CD8-positive, alpha-beta memory T cell (primary cell): ENCODE measurements at regions of chr5 and their contacts with region 1.

Region 1: GRCh38 chr5:96934708-96935558 is 947 bp upstream of the LNPEP start:
- DNase-seq: peak; percentile 87 to 99 (median 96)
- H3K4me3 ChIP-seq: peak overlapping the region; percentile 89
- H3K4me3 Mint-ChIP-seq: peak overlapping the region; percentile 82 to 94 (median 91)
- H3K27ac ChIP-seq: peak overlapping the region; percentile 81
- H3K27ac Mint-ChIP-seq: peak overlapping the region; percentile 85 to 100 (median 96)
- H3K4me1 ChIP-seq: peaks cover 67% of the 10 kb centered on the region
- H3K4me1 Mint-ChIP-seq: peaks cover 66 to 75% (median 75%) of the 10 kb centered on the region in 3 donors
- H3K27me3 ChIP-seq: no peaks in the 10 kb centered on the region
- H3K27me3 Mint-ChIP-seq: peaks cover 0 to 3% of the 10 kb centered on the region in 2 donors

Region 2: DNA sequence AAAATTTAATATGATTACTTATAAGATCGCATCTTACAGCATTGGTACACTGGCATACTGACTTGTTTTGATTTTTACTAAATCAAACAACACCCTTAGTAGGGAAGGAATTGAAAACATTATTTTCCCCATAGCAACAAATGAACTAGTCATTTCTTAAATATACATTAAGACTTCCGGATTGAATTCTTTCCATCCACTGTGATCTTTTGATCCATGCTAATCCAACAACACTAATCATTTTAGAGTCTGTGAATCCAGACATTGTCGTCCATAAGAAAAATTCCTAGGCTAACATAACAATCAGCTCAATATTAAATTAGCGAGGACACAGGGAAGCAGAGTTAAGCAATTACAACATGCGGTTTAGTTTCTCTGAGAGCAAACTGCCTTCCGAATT is 105.6 kb before region 1 on chr5:
- CTCF ChIA-PET with region 1: no interaction called
- POLR2A ChIA-PET with region 1: no interaction called
- DNase-seq: no peak
- H3K4me3 ChIP-seq: no peak overlapping the region
- H3K4me3 Mint-ChIP-seq: no peak overlapping the region
- H3K27ac ChIP-seq: no peak overlapping the region
- H3K27ac Mint-ChIP-seq: no peak overlapping the region
- H3K4me1 ChIP-seq: no peaks in the 10 kb centered on the region
- H3K4me1 Mint-ChIP-seq: peaks cover 0 to 2% (median 0%) of the 10 kb centered on the region in 3 donors
- H3K27me3 ChIP-seq: no peaks in the 10 kb centered on the region
- H3K27me3 Mint-ChIP-seq: peaks cover 0 to 2% of the 10 kb centered on the region in 2 donors

Region 3: GRCh38 chr5:96876292-96876850 is 58.6 kb before region 1 on chr5 and contains the start of gene ERAP2:
- CTCF ChIA-PET with region 1: interaction called, 3 read pairs
- POLR2A ChIA-PET with region 1: interaction called, 22 read pairs
- DNase-seq: peak in 2 of 5 donors; percentile 60 to 67
- H3K4me3 ChIP-seq: peak within 1 kb of the TSS; percentile 74
- H3K4me3 Mint-ChIP-seq: peak within 1 kb of the TSS; percentile 87 to 97 (median 94)
- H3K27ac ChIP-seq: peak within 1 kb of the TSS; percentile 72
- H3K27ac Mint-ChIP-seq: peak within 1 kb of the TSS; percentile 89 to 99 (median 97)
- H3K4me1 ChIP-seq: peaks cover 57% of the 10 kb centered on the region
- H3K4me1 Mint-ChIP-seq: peaks cover 47 to 75% (median 62%) of the 10 kb centered on the region in 3 donors
- H3K27me3 ChIP-seq: no peaks in the 10 kb centered on the region
- H3K27me3 Mint-ChIP-seq: no peaks in the 10 kb centered on the region
- total RNA-seq, gene ERAP2: 37.0 to 41.4 TPM

Region 4: GRCh38 chr5:96963267-96963666 is 28.3 kb after region 1 on chr5:
- CTCF ChIA-PET with region 1: interaction called, 8 read pairs
- POLR2A ChIA-PET with region 1: interaction called, 14 read pairs
- DNase-seq: no peak
- H3K4me3 ChIP-seq: peak overlapping the region; percentile 3
- H3K4me3 Mint-ChIP-seq: peak overlapping the region; percentile 29 to 79 (median 70)
- H3K27ac ChIP-seq: no peak overlapping the region
- H3K27ac Mint-ChIP-seq: peak overlapping the region; percentile 30 to 93 (median 90)
- H3K4me1 ChIP-seq: peaks cover 76% of the 10 kb centered on the region
- H3K4me1 Mint-ChIP-seq: peaks cover 79 to 96% (median 95%) of the 10 kb centered on the region in 3 donors
- H3K27me3 ChIP-seq: no peaks in the 10 kb centered on the region
- H3K27me3 Mint-ChIP-seq: no peaks in the 10 kb centered on the region

Region 5: DNA sequence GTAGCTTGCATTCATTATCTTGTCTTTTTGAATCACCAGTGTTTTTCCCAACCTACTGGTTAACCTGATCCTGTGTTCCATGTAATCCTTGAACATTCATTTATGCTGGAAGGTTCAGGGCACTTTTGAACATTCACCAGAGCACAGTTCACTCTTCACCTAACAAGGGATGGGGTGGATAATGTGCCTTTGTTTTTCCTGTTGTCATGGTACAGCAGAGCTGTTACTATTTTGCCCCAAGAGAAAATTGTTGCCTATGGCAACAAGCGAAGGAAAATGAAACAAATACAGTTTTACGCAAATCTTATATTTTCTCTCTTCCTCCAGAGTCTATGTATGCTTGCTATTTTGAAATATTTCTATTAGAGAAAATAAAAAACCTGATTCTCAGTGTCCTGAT is 308.4 kb after region 1 on chr5:
- CTCF ChIA-PET with region 1: no interaction called
- POLR2A ChIA-PET with region 1: no interaction called
- DNase-seq: no peak
- H3K4me3 ChIP-seq: no peak overlapping the region
- H3K4me3 Mint-ChIP-seq: no peak overlapping the region
- H3K27ac ChIP-seq: no peak overlapping the region
- H3K27ac Mint-ChIP-seq: no peak overlapping the region
- H3K4me1 ChIP-seq: no peaks in the 10 kb centered on the region
- H3K4me1 Mint-ChIP-seq: no peaks in the 10 kb centered on the region
- H3K27me3 ChIP-seq: no peaks in the 10 kb centered on the region
- H3K27me3 Mint-ChIP-seq: peaks cover 5 to 12% of the 10 kb centered on the region in 2 donors

Region 6: DNA sequence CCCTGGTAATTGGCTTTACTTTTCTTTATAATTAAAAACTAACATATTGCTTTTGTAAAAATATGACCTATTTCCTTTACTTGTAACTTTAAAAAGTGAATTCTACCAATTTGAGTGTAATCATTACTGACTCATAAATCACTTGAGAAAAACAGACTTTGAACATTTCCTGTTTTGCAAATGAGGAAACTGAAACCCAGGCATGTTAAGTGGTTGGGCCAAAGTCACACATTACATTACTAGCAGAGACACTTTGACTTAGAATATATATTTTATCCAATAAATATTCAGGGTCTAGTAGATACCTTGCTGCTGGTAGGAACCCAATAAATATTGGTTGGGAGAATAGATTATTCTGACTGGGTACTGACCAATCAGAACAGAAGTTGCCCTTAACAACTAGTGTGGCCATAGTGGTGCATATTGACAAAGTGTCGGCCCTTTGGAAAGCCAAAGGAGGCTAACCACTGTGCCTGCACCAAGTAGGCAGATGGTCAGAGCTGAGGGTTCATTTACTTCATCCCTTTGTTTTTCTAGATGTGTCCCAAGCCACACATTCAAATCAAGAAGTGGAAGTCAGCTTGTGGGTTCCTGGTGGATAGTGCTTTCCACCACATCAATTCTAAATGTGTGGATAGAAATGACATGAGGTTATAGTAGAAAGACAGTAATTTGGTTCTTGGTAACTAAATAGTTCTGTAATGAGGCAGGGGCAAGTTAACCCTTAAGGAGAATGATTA is 613.2 kb after region 1 on chr5:
- CTCF ChIA-PET with region 1: no interaction called
- POLR2A ChIA-PET with region 1: no interaction called
- DNase-seq: no peak
- H3K4me3 ChIP-seq: no peak overlapping the region
- H3K4me3 Mint-ChIP-seq: no peak overlapping the region
- H3K27ac ChIP-seq: no peak overlapping the region
- H3K27ac Mint-ChIP-seq: peak overlapping the region in 1 of 8 donors; percentile 8
- H3K4me1 ChIP-seq: peaks cover 4% of the 10 kb centered on the region
- H3K4me1 Mint-ChIP-seq: no peaks in the 10 kb centered on the region
- H3K27me3 ChIP-seq: no peaks in the 10 kb centered on the region
- H3K27me3 Mint-ChIP-seq: peaks cover 0 to 1% of the 10 kb centered on the region in 2 donors